Dendritic cell treated with granulocyte-macrophage colony-stimulating factor and Interleukin-4, amounts not matched to agents 40 ng/mL and 50 ng/mL, for 4 days (primary cell): ENCODE measurements at regions of chr2 and their contacts with region 1.

Region 1: DNA sequence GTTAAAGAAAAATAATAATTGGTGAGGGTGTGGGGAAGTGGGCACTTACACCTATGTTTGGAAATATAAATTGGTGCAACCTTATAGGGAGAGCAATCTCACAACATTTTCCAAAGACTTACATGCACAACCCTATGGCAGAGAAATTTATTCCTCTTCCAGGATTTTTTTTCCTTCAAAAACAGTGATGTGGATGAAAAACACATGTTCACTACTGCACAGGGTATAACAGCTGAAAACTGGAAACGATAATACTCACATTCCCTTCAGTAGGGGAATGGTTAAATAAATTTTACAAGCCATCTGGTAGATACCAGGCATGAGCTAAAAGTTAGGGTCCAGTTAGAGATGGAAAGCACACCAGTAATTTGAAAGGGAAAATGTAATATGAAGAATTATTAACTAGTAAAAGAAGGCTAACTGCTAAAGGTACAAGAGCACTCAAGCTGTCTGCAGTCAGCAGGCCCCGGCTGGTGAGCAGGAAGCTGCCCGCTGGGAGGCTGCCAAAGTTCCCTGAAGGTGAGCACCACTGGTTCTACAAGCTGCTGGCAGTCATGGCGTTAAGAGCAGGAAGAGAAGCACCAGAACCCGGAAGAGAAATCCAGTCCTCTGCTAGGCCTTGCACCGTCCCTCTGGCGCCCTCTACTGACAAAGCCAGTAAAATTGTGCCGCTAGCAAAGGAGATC is 28.4 kb upstream of the CASP8 start:
- H3K4me3 Mint-ChIP-seq: peak overlapping the region; percentile 20
- H3K27ac Mint-ChIP-seq: peak overlapping the region; percentile 77
- H3K4me1 Mint-ChIP-seq: peaks cover 39% of the 10 kb centered on the region
- H3K27me3 Mint-ChIP-seq: no peaks in the 10 kb centered on the region

Region 2: DNA sequence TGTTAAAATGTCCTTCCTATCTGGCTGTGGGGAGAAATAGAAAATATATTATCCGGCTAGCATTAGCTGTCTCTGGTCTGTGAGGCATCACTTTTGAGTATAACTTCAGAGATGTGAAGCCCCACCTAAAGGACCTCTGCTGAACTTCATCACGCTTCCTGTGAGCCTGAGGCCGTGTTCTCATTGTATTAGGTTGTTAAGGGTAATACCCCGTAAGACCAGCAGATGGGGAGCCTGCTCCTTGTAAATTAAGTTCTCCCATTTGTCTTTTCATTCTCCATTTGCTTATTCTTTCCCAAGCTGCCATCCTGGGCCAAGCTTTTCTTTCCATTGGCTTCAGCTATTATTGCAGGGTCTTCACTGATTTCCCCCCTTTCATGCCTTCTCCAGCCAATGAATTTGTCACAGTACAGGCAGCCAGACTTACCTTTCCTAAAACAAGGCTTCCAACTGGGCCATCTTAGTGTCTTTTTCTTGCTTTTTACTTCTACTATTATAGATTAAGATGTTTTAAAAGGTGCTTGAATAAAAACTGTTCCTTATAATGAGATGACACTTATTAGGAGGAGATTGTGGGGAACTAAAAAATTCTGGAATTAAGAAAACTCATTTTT is 330.4 kb before region 1 on chr2:
- intact Hi-C with region 1: loop called (anchors 5 kb)
- H3K4me3 Mint-ChIP-seq: no peak overlapping the region
- H3K27ac Mint-ChIP-seq: no peak overlapping the region
- H3K4me1 Mint-ChIP-seq: peaks cover 9% of the 10 kb centered on the region
- H3K27me3 Mint-ChIP-seq: no peaks in the 10 kb centered on the region

Region 3: GRCh38 chr2:201182650-201183364 is 49.1 kb before region 1 on chr2 and contains the start of gene CASP10:
- intact Hi-C with region 1: loop called (anchors 1 kb)
- H3K4me3 Mint-ChIP-seq: peak within 1 kb of the TSS; percentile 90
- H3K27ac Mint-ChIP-seq: peak within 1 kb of the TSS; percentile 93
- H3K4me1 Mint-ChIP-seq: peaks cover 40% of the 10 kb centered on the region
- H3K27me3 Mint-ChIP-seq: no peaks in the 10 kb centered on the region

Region 4: GRCh38 chr2:201363857-201364560 is 132.1 kb after region 1 on chr2:
- intact Hi-C with region 1: loop called (anchors 1 kb)
- H3K4me3 Mint-ChIP-seq: no peak overlapping the region
- H3K27ac Mint-ChIP-seq: no peak overlapping the region
- H3K4me1 Mint-ChIP-seq: no peaks in the 10 kb centered on the region
- H3K27me3 Mint-ChIP-seq: no peaks in the 10 kb centered on the region

Region 5: GRCh38 chr2:202178342-202178958 is 946.5 kb after region 1 on chr2:
- intact Hi-C with region 1: loop called (anchors 10 kb)
- H3K4me3 Mint-ChIP-seq: no peak overlapping the region
- H3K27ac Mint-ChIP-seq: no peak overlapping the region
- H3K4me1 Mint-ChIP-seq: no peaks in the 10 kb centered on the region
- H3K27me3 Mint-ChIP-seq: peaks cover 4% of the 10 kb centered on the region